Activated T-helper 2 cell treated with anti-CD3 and anti-CD28 coated beads, Interferon-gamma antibody, Interleukin-2, Interleukin-4, amounts not matched to agents 10 μg/mL and 5 μg/mL and 100 μg/mL, durations not matched to agents 14 hours and 24 hours and 36 hours (primary cell): ENCODE measurements at regions of chr5 and their contacts with region 1.

Region 1: GRCh38 chr5:79736528-79737514 is 47.2 kb downstream of the CMYA5 start:
- DNase-seq: peak; percentile 16
- H3K4me3 Mint-ChIP-seq: peak overlapping the region; percentile 57
- H3K27ac Mint-ChIP-seq: peak overlapping the region; percentile 59
- H3K4me1 Mint-ChIP-seq: peaks cover 47% of the 10 kb centered on the region
- H3K27me3 Mint-ChIP-seq: peaks cover 51% of the 10 kb centered on the region

Region 2: DNA sequence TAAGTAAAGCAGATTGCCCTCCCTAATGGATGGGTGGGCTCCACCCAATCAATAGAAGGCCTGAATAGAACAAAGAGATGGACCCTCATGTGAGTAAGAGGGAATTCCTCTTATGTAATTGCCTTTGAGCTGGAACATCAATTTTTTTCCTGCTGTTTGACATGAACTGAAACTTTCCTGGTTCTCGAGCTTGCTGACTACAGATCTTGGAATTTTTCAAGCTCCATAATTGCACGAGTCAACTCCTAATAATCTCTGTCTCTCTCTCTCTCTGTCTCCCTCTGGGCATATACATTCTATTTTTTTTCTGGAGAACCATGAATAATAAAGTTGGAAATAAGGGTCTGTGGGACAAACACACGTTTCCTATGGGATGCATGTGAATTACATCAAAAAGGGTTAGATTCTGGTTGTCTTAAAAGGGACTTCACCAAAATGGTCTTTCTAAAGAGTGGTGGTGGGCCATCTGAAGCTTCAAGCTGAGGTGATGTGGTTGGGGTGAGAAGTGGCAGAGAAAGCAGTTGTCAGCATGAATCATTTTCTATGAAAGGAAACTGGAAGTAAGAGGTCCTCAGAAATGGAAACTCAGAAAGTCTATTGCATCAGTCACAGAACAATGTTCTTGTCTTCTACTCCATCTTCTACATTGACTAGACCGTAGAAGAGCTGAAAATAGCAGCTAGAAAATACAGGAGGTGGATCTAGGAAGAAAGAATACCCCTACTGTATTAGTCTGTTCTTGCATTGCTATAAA is 175.9 kb before region 1 on chr5:
- intact Hi-C with region 1: loop called (anchors 2 kb)
- DNase-seq: peak; percentile 13
- H3K4me3 Mint-ChIP-seq: peak overlapping the region; percentile 19
- H3K27ac Mint-ChIP-seq: peak overlapping the region; percentile 95
- H3K4me1 Mint-ChIP-seq: peaks cover 48% of the 10 kb centered on the region
- H3K27me3 Mint-ChIP-seq: no peaks in the 10 kb centered on the region

Region 3: GRCh38 chr5:79845448-79846197 is 108.8 kb after region 1 on chr5:
- intact Hi-C with region 1: loop called (anchors 2 kb)
- DNase-seq: peak; percentile 21
- H3K4me3 Mint-ChIP-seq: no peak overlapping the region
- H3K27ac Mint-ChIP-seq: peak overlapping the region; percentile 50
- H3K4me1 Mint-ChIP-seq: peaks cover 22% of the 10 kb centered on the region
- H3K27me3 Mint-ChIP-seq: peaks cover 4% of the 10 kb centered on the region

Region 4: GRCh38 chr5:80231243-80231642 is 494.4 kb after region 1 on chr5:
- intact Hi-C with region 1: no loop called
- DNase-seq: no peak
- H3K4me3 Mint-ChIP-seq: no peak overlapping the region
- H3K27ac Mint-ChIP-seq: peak overlapping the region; percentile 29
- H3K4me1 Mint-ChIP-seq: peaks cover 34% of the 10 kb centered on the region
- H3K27me3 Mint-ChIP-seq: no peaks in the 10 kb centered on the region